ENCODE measurements at regions of chr4 and their contacts with region 1.

Region 1: DNA sequence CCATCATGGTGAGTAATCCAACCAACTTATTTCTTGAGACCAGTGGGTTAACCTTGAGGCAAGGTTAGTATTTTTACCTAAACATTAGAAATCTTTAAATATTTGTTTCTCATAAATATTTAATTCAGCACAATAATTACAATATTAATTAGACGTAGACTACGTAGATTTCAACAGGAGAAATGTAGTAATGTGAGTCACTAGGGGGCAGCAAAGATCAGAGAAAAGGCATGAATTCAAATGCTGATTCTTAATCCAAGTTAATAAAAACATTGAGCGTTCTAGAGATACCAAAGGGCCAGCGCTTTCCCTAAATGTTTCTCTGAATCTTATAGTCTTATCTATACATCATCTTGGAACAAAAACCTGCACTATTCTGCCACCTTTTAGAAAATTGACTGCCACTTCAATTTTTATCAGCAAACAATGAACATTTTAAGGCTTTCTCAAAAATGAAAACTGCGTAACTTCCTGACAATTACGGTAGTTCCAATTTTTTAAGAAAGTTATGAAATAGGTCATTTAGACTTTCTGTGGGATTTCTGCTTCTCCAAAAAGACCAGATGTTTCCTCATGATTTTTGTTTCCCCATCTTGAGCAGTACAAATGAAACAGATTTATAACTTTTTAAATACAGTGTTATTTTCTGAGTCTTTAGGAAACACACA is 180.7 kb downstream of the GASK1B start:
- DNase-seq: peak in 1 of 2 experiments; percentile 52
- H3K4me3 ChIP-seq: no peak overlapping the region
- H3K4me3 Mint-ChIP-seq: peak overlapping the region; percentile 33
- H3K27ac Mint-ChIP-seq: no peak overlapping the region
- H3K4me1 ChIP-seq: peaks cover 39% of the 10 kb centered on the region
- H3K4me1 Mint-ChIP-seq: peaks cover 15% of the 10 kb centered on the region
- H3K27me3 ChIP-seq: no peaks in the 10 kb centered on the region
- H3K27me3 Mint-ChIP-seq: no peaks in the 10 kb centered on the region
- CTCF ChIP-seq: peak; percentile 9 to 27

Region 2: GRCh38 chr4:157372567-157372966 is 619.6 kb before region 1 on chr4:
- CTCF ChIA-PET with region 1: no interaction called
- POLR2A ChIA-PET with region 1: no interaction called
- intact Hi-C with region 1: no loop called
- DNase-seq: no peak
- H3K4me3 ChIP-seq: no peak overlapping the region
- H3K4me3 Mint-ChIP-seq: no peak overlapping the region
- H3K27ac Mint-ChIP-seq: no peak overlapping the region
- H3K4me1 ChIP-seq: no peaks in the 10 kb centered on the region
- H3K4me1 Mint-ChIP-seq: no peaks in the 10 kb centered on the region
- H3K27me3 ChIP-seq: no peaks in the 10 kb centered on the region
- H3K27me3 Mint-ChIP-seq: peaks cover 3% of the 10 kb centered on the region
- CTCF ChIP-seq: no peak

Region 3: DNA sequence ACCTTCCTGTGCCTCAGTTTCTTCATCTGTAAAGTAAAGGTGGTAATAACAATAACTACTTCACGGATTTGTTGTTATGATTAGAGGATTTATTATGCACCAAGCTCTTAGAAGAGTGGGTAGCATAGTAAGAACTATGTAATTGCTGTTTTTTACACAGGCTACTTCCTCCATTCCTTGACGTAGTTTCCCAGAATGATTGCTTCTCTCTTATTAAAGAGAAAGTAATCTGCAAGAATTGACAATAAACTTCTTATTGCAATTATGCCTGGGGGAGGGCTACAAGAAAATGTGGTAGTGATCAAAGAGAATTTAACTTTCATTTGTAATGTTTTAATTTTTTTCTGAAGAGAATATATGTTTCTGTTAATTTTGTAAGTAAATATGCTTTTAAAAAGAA is 58.0 kb before region 1 on chr4:
- CTCF ChIA-PET with region 1: no interaction called
- POLR2A ChIA-PET with region 1: no interaction called
- intact Hi-C with region 1: no loop called
- DNase-seq: no peak
- H3K4me3 ChIP-seq: no peak overlapping the region
- H3K4me3 Mint-ChIP-seq: no peak overlapping the region
- H3K27ac Mint-ChIP-seq: no peak overlapping the region
- H3K4me1 ChIP-seq: no peaks in the 10 kb centered on the region
- H3K4me1 Mint-ChIP-seq: no peaks in the 10 kb centered on the region
- H3K27me3 ChIP-seq: no peaks in the 10 kb centered on the region
- H3K27me3 Mint-ChIP-seq: no peaks in the 10 kb centered on the region
- CTCF ChIP-seq: no peak

Region 4: DNA sequence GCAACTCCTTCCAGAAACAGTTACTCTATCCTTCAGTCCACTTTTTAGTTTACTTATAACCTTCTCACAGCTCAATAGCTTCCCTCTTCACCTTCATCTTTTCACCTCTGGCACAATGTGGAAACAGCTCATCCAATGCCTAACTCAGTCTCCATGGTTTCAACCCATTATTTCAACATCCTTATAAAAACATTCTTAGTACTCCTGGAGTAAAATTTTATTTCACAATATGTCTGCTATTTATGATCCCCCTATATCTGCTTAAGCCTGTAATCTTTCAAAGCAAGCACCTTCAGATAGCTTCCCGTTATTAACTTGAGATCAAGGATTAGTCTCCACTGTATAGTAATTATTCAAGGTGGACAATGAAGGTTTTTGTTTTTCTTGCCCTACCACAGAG is 24.3 kb after region 1 on chr4:
- CTCF ChIA-PET with region 1: no interaction called
- POLR2A ChIA-PET with region 1: no interaction called
- intact Hi-C with region 1: loop called (anchors 2 kb)
- DNase-seq: no peak
- H3K4me3 ChIP-seq: no peak overlapping the region
- H3K4me3 Mint-ChIP-seq: no peak overlapping the region
- H3K27ac Mint-ChIP-seq: no peak overlapping the region
- H3K4me1 ChIP-seq: peaks cover 15% of the 10 kb centered on the region
- H3K4me1 Mint-ChIP-seq: peaks cover 13% of the 10 kb centered on the region
- H3K27me3 ChIP-seq: no peaks in the 10 kb centered on the region
- H3K27me3 Mint-ChIP-seq: no peaks in the 10 kb centered on the region
- CTCF ChIP-seq: no peak

Region 5: GRCh38 chr4:158051401-158052235 is 59.4 kb after region 1 on chr4:
- CTCF ChIA-PET with region 1: no interaction called
- POLR2A ChIA-PET with region 1: no interaction called
- intact Hi-C with region 1: no loop called
- DNase-seq: no peak
- H3K4me3 ChIP-seq: no peak overlapping the region
- H3K4me3 Mint-ChIP-seq: no peak overlapping the region
- H3K27ac Mint-ChIP-seq: no peak overlapping the region
- H3K4me1 ChIP-seq: no peaks in the 10 kb centered on the region
- H3K4me1 Mint-ChIP-seq: no peaks in the 10 kb centered on the region
- H3K27me3 ChIP-seq: no peaks in the 10 kb centered on the region
- H3K27me3 Mint-ChIP-seq: no peaks in the 10 kb centered on the region
- CTCF ChIP-seq: no peak

Region 6: DNA sequence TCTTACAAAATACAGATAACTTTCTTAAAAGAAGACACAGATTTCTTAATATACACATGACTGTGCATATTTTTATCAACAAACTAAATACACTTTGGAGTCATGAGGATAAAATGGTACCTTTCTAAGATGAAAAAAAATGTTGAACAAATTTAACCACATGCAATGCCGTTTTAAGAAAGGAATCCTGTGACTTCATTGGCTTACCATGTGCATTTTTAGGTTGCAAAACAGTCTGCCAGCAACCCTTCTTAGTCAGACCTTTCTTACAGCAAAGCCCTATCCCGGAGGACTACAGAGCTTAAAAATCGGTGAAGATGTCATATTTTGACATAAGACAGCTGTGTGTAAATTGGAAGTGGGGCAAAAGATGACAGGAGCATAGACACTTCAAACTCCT is 129.0 kb after region 1 on chr4:
- CTCF ChIA-PET with region 1: no interaction called
- POLR2A ChIA-PET with region 1: no interaction called
- intact Hi-C with region 1: loop called (anchors 1 kb)
- DNase-seq: peak in 1 of 2 experiments; percentile 46
- H3K4me3 ChIP-seq: no peak overlapping the region
- H3K4me3 Mint-ChIP-seq: peak overlapping the region; percentile 40
- H3K27ac Mint-ChIP-seq: peak overlapping the region; percentile 68
- H3K4me1 ChIP-seq: peaks cover 8% of the 10 kb centered on the region; the same call in 1 of the 2 replicates
- H3K4me1 Mint-ChIP-seq: peaks cover 6% of the 10 kb centered on the region
- H3K27me3 ChIP-seq: no peaks in the 10 kb centered on the region
- H3K27me3 Mint-ChIP-seq: no peaks in the 10 kb centered on the region
- CTCF ChIP-seq: no peak

Region 7: GRCh38 chr4:158172261-158173258 is 180.4 kb after region 1 on chr4 and contains the start of gene GASK1B:
- CTCF ChIA-PET with region 1: no interaction called
- POLR2A ChIA-PET with region 1: no interaction called
- intact Hi-C with region 1: loop called (anchors 1 kb)
- DNase-seq: peak; percentile 56 to 68
- H3K4me3 ChIP-seq: peak within 1 kb of the TSS; percentile 49
- H3K4me3 Mint-ChIP-seq: peak within 1 kb of the TSS; percentile 89
- H3K27ac Mint-ChIP-seq: peak within 1 kb of the TSS; percentile 97
- H3K4me1 ChIP-seq: peaks cover 14% of the 10 kb centered on the region
- H3K4me1 Mint-ChIP-seq: peaks cover 14% of the 10 kb centered on the region
- H3K27me3 ChIP-seq: no peaks in the 10 kb centered on the region
- H3K27me3 Mint-ChIP-seq: no peaks in the 10 kb centered on the region
- CTCF ChIP-seq: peak; percentile 25 to 27
- total RNA-seq, gene GASK1B: 42.5 and 48.5 TPM in 2 replicates

Region 8: GRCh38 chr4:158253350-158253980 is 261.3 kb after region 1 on chr4:
- CTCF ChIA-PET with region 1: no interaction called
- POLR2A ChIA-PET with region 1: no interaction called
- intact Hi-C with region 1: loop called (anchors 1 kb)
- DNase-seq: peak in 1 of 2 experiments; percentile 71
- H3K4me3 ChIP-seq: no peak overlapping the region
- H3K4me3 Mint-ChIP-seq: no peak overlapping the region
- H3K27ac Mint-ChIP-seq: no peak overlapping the region
- H3K4me1 ChIP-seq: no peaks in the 10 kb centered on the region
- H3K4me1 Mint-ChIP-seq: no peaks in the 10 kb centered on the region
- H3K27me3 ChIP-seq: no peaks in the 10 kb centered on the region
- H3K27me3 Mint-ChIP-seq: no peaks in the 10 kb centered on the region
- CTCF ChIP-seq: peak; percentile 44 to 61

Measured in Caco-2 (cell line).